MCF 10A (cell line): ENCODE measurements at regions of chr4 and their contacts with region 1.

Region 1: GRCh38 chr4:99723612-99724011 is 66.0 kb upstream of the C4orf54 start:
- DNase-seq: peak; percentile 93
- H3K4me3 Mint-ChIP-seq: no peak overlapping the region
- H3K27ac Mint-ChIP-seq: no peak overlapping the region
- H3K4me1 Mint-ChIP-seq: peaks cover 13% of the 10 kb centered on the region
- H3K27me3 Mint-ChIP-seq: no peaks in the 10 kb centered on the region
- CTCF ChIP-seq: no peak

Region 2: GRCh38 chr4:99624141-99624719 is 99.4 kb before region 1 on chr4:
- CTCF ChIA-PET with region 1: no interaction called
- POLR2A ChIA-PET with region 1: no interaction called
- intact Hi-C with region 1: no loop called
- DNase-seq: no peak
- H3K4me3 Mint-ChIP-seq: no peak overlapping the region
- H3K27ac Mint-ChIP-seq: no peak overlapping the region
- H3K4me1 Mint-ChIP-seq: no peaks in the 10 kb centered on the region
- H3K27me3 Mint-ChIP-seq: no peaks in the 10 kb centered on the region
- CTCF ChIP-seq: no peak

Region 3: GRCh38 chr4:99710681-99711345 is 12.8 kb before region 1 on chr4:
- CTCF ChIA-PET with region 1: interaction called, 26 read pairs
- POLR2A ChIA-PET with region 1: interaction called, 42 read pairs
- intact Hi-C with region 1: no loop called
- DNase-seq: peak; percentile 82
- H3K4me3 Mint-ChIP-seq: no peak overlapping the region
- H3K27ac Mint-ChIP-seq: peak overlapping the region; percentile 24
- H3K4me1 Mint-ChIP-seq: peaks cover 14% of the 10 kb centered on the region
- H3K27me3 Mint-ChIP-seq: no peaks in the 10 kb centered on the region
- CTCF ChIP-seq: no peak

Region 4: GRCh38 chr4:99763635-99764101 is 40.1 kb after region 1 on chr4:
- CTCF ChIA-PET with region 1: interaction called, 5 read pairs
- POLR2A ChIA-PET with region 1: interaction called, 16 read pairs
- intact Hi-C with region 1: loop called (anchors 2 kb)
- DNase-seq: peak; percentile 98
- H3K4me3 Mint-ChIP-seq: no peak overlapping the region
- H3K27ac Mint-ChIP-seq: no peak overlapping the region
- H3K4me1 Mint-ChIP-seq: peaks cover 30% of the 10 kb centered on the region
- H3K27me3 Mint-ChIP-seq: no peaks in the 10 kb centered on the region
- CTCF ChIP-seq: no peak